Upper lobe of right lung (tissue), 1 donor: ENCODE measurements at regions of chr22 and their contacts with region 1.

Region 1: DNA sequence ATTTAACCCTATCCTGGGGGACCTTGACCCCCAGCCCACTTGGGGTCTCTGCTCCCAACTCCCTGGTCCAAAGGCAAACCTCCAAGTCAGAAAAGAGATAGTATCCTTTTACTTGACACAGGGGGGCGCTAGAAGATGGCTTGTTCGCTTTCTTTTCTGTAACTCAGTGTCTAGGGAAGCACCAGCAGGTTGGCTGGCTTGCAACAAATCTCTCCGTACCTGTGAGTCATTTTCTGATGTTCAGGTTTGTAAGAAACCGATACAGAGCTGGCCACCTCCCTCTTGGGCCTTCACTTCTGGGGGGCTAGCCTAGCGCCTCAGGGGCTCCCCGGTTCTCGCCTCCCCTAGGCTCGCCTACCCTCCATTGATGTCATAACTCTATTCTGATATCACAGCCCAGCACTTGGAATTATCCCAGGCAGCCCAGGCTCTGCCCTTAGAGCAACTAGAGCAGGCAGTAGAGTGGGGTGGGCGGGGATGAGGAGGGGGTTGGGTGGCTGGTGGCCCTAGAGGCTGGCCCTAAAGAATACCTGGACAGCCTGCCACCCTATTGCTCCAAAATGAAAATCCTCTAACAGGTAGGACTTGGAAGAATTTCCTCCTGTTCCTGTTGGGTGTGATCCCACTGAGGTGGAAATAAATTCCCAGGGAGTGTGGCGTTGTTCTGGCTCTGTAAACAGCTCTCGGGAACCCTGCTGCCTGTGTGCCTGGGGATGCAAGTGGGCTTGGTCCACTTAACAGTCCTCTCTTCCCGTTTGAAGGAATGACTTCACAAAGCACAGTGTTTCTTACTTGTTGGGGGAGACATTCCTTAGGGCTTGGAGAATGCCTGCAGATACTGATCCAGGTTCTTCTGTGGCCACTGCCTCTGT is 69.4 kb downstream of the OSBP2 start:
- DNase-seq: no peak
- ATAC-seq: peak; percentile 81
- H3K4me3 ChIP-seq: no peak overlapping the region
- H3K27ac ChIP-seq: no peak overlapping the region
- H3K4me1 ChIP-seq: no peaks in the 10 kb centered on the region
- H3K27me3 ChIP-seq: no peaks in the 10 kb centered on the region
- CTCF ChIP-seq: peak; percentile 60

Region 2: GRCh38 chr22:30721741-30722140 is 42.3 kb before region 1 on chr22:
- intact Hi-C with region 1: no loop called
- DNase-seq: no peak
- ATAC-seq: no peak
- H3K4me3 ChIP-seq: no peak overlapping the region
- H3K27ac ChIP-seq: no peak overlapping the region
- H3K4me1 ChIP-seq: no peaks in the 10 kb centered on the region
- H3K27me3 ChIP-seq: no peaks in the 10 kb centered on the region
- CTCF ChIP-seq: no peak

Region 3: DNA sequence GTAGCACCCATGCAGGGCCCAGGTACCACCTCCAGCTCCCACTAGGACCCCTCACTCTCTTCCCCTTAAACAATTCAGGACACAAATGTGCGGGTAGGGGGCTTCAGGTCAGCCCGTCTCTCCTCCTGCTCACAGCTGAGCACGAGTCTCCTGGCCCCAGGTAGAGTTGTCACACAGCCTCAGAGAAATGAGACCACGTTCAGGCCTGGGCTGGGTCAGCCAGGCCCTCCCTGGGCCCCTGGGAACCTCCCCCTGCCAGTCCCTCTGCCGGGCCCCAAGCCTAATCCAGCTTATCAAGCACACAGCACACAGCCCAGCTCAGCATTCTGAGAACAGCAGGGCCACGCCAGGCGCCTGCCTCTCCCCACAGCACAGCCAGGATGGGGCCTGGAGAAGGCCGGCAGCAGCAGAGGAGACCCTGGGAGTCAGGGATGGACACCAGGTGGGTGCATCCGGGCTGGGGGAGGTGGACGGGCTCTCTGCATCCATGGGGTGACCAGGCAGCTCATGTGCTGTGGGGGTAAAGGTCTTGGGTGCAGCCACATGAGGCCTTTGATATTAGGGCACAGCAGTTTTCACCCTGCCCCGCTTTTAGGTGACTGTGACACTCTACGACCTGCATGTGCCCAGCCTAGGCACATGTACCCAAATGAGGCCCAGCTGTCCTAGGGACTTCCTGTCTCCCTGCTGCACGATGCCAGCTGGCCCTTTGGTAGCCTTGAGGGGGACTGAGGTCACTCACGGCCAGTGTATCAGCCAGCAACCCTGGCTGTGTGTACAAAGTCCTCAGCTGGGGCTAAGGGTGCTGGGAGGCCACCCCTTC is 117.5 kb after region 1 on chr22:
- intact Hi-C with region 1: loop called (anchors 10 kb)
- DNase-seq: peak; percentile 47
- ATAC-seq: no peak
- H3K4me3 ChIP-seq: no peak overlapping the region
- H3K27ac ChIP-seq: no peak overlapping the region
- H3K4me1 ChIP-seq: no peaks in the 10 kb centered on the region
- H3K27me3 ChIP-seq: no peaks in the 10 kb centered on the region
- CTCF ChIP-seq: no peak

Region 4: GRCh38 chr22:30920407-30920806 is 156.4 kb after region 1 on chr22:
- intact Hi-C with region 1: loop called (anchors 5 kb)
- DNase-seq: peak; percentile 88
- ATAC-seq: peak; percentile 87
- H3K4me3 ChIP-seq: no peak overlapping the region
- H3K27ac ChIP-seq: no peak overlapping the region
- H3K4me1 ChIP-seq: no peaks in the 10 kb centered on the region
- H3K27me3 ChIP-seq: no peaks in the 10 kb centered on the region
- CTCF ChIP-seq: peak; percentile 96